ENCODE measurements at regions of chr22 and their contacts with region 1.

Region 1: DNA sequence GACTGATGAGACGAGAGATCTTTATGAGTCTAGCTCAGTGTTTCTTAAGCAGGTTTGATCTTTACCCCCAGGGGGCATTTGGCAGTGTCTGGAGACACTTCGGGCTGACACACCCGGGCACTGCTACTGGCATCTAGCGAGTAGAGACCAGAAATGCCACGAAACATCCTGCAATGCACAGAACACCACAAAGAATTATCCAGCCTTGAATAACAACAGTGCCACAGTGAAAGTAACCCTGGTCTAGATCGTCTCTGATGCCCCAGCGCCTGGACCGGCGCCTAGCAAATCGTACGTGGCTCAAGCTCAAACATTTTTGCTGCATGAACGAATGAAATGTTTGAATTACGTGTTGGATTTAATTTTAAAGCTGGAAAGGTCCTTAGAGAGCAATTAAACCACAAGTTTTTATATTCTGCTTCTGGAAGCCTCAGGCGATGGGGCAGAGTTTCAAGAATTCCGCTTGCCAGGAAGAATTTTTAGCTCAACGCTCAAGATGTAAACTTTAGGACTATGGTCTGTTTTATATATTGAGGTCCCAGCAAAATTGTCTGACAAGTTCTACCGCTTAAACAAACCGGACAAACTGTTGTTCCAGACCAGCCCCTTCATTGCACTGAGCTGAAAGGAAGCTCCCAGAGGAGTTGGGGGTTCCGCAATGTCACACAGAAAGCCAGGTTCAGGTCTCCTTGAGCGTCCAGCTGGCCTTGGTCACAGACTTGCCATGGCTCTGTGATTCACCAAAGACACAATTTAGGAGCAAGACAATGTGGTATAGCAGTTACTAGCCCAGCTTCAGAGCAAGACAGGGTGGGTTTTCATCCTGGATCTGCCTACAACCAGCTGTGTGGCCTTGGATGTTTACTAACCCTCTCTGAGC is 44.2 kb upstream of the SMTN start:
- DNase-seq: no peak
- ATAC-seq: no peak

Region 2: GRCh38 chr22:30396871-30397655 is 639.8 kb before region 1 on chr22 and contains the start of gene SEC14L2:
- intact Hi-C with region 1: no loop called
- DNase-seq: peak; percentile 84
- ATAC-seq: peak; percentile 69
- total RNA-seq, gene SEC14L2: 20.8 TPM

Region 3: DNA sequence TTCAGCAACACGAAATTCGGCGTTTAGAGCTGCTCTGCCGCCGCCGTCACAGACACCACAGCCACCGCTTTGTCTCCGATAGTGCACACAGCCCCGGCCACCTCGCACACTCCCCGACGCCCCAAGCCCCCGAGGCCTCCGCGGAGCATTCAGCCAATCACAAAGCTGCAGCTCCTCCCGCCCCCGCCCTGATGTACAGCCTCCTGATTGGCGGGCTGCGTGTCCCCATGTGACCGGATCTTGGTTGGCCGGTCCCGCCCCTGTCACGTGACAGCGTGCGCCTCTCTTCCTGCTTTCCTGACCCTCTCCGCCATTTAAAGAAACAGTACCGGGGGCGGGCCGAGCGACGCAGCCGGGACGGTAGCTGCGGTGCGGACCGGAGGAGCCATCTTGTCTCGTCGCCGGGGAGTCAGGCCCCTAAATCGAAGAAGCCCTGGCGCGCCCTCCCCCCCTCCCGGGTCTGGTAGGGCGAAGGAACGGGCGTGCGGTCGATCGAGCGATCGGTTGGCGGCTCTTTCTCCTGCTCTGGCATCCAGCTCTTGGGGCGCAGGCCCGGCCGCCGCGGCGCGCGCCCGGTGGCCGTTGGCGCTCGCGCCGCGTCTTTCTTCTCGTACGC is 67.9 kb before region 1 on chr22 and contains the start of gene TUG1:
- intact Hi-C with region 1: loop called (anchors 10 kb)
- DNase-seq: peak; percentile 99
- ATAC-seq: peak; percentile 100
- total RNA-seq, gene TUG1: 95.7 TPM

Region 4: DNA sequence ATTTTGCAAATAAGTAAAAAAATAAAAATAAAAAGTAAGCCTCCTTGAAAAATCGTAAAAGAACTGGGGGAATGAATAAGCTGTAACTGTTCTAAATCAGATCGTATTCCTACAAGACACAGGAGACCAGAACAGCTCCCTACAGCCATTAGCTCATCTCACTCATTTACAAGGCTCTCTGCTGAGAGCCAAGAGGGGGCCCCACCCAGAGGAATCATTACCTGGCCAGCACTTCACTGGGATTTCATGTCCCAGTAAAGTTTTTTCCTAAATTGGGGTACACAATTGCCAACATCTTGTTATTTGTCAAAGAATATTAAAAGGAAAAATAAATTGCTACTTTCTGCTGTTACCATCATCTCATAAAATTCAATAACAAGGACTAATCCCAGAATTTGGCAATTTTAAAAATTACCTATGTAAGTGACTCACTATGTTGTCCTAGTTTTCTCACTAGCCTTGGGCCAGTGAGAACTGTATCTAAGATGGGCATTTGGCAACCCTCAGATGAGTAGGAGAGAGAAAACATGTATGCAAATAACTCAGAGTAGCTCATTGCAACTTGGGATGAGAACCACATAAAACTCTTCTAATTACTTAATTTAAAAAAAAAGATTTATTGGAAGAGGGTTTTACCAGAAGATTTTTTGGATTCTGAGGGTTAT is 25.8 kb after region 1 on chr22:
- intact Hi-C with region 1: no loop called
- DNase-seq: no peak
- ATAC-seq: no peak

Region 5: DNA sequence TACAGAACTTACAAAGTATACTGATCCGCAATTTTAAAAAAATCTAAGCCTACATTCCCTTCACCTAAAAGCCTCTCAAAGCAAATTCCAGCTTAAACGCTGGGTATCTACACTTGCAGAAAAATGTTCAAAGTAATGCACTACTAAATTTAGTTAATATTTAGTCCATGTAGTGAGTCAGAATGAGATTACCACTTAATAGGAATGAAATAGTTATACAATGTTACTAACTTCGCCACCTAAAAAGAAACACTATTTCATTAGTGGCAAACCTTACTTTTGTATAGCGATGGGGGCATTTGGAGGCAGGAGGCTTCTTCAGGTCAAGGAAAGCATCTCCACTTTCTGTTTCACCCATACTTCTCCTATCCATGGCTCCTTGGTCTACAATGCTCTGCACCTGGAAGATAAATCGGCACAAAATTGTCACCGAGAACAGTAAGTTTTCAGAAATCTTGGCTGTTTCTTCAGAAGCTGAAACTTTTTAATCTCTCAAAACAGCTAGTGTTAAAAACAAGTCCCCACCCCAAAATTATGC is 451.5 kb after region 1 on chr22:
- intact Hi-C with region 1: no loop called
- DNase-seq: no peak
- ATAC-seq: no peak